CD14-positive monocyte (primary cell): ENCODE measurements at regions of chr1 and their contacts with region 1.

Region 1: GRCh38 chr1:151459331-151460046 is at the start of gene POGZ:
- DNase-seq: peak; percentile 85 to 93 (median 92)
- H3K4me3 ChIP-seq: peak within 1 kb of the TSS; percentile 83 to 99 (median 87)
- H3K4me3 Mint-ChIP-seq: peak within 1 kb of the TSS; percentile 87 to 93
- H3K27ac ChIP-seq: peak within 1 kb of the TSS; percentile 82 to 84
- H3K27ac Mint-ChIP-seq: peak within 1 kb of the TSS; percentile 81 to 97 (median 95)
- H3K4me1 ChIP-seq: peaks cover 21 to 22% of the 10 kb centered on the region in 2 donors
- H3K4me1 Mint-ChIP-seq: peaks cover 20% of the 10 kb centered on the region
- H3K27me3 ChIP-seq: peaks cover 0 to 16% of the 10 kb centered on the region in 2 donors
- H3K27me3 Mint-ChIP-seq: peaks cover 8 to 17% (median 13%) of the 10 kb centered on the region in 3 donors
- CTCF ChIP-seq: no peak
- polyA plus RNA-seq, gene POGZ: 0.75 to 41.7 (median 1.8) TPM

Region 2: GRCh38 chr1:151281969-151282882 is 177.3 kb before region 1 on chr1 and contains the start of gene ZNF687:
- intact Hi-C with region 1: loop called in 1 of 2 experiments (anchors 10 kb)
- DNase-seq: peak; percentile 99
- H3K4me3 ChIP-seq: peak within 1 kb of the TSS; percentile 63 to 96 (median 88)
- H3K4me3 Mint-ChIP-seq: peak within 1 kb of the TSS; percentile 99 to 100
- H3K27ac ChIP-seq: peak within 1 kb of the TSS; percentile 94 to 96
- H3K27ac Mint-ChIP-seq: peak within 1 kb of the TSS; percentile 99 to 100 (median 100)
- H3K4me1 ChIP-seq: peaks cover 43 to 61% of the 10 kb centered on the region in 2 donors
- H3K4me1 Mint-ChIP-seq: peaks cover 42% of the 10 kb centered on the region
- H3K27me3 ChIP-seq: no peaks in the 10 kb centered on the region
- H3K27me3 Mint-ChIP-seq: peaks cover 0 to 1% (median 0%) of the 10 kb centered on the region in 3 donors
- CTCF ChIP-seq: no peak
- polyA plus RNA-seq, gene ZNF687: 1.3 to 26.5 (median 1.8) TPM

Region 3: GRCh38 chr1:151539990-151540981 is 80.8 kb after region 1 on chr1 and contains the start of gene TUFT1:
- intact Hi-C with region 1: loop called in 1 of 2 experiments (anchors 5 kb)
- DNase-seq: peak; percentile 81 to 88 (median 86)
- H3K4me3 ChIP-seq: peak within 1 kb of the TSS; percentile 59 to 87 (median 78)
- H3K4me3 Mint-ChIP-seq: peak within 1 kb of the TSS; percentile 95 to 96
- H3K27ac ChIP-seq: peak within 1 kb of the TSS; percentile 25 to 57
- H3K27ac Mint-ChIP-seq: peak within 1 kb of the TSS; percentile 70 to 89 (median 83)
- H3K4me1 ChIP-seq: peaks cover 21% of the 10 kb centered on the region in 2 donors
- H3K4me1 Mint-ChIP-seq: peaks cover 24% of the 10 kb centered on the region
- H3K27me3 ChIP-seq: peaks cover 5 to 20% of the 10 kb centered on the region in 2 donors
- H3K27me3 Mint-ChIP-seq: peaks cover 21 to 30% (median 27%) of the 10 kb centered on the region in 3 donors
- CTCF ChIP-seq: no peak
- polyA plus RNA-seq, gene TUFT1: 1.5 to 1.7 (median 1.6) TPM

Region 4: GRCh38 chr1:151619489-151620093 is 160.1 kb after region 1 on chr1:
- intact Hi-C with region 1: loop called in 1 of 2 experiments (anchors 5 kb)
- DNase-seq: peak; percentile 33 to 66 (median 66)
- H3K4me3 ChIP-seq: peak overlapping the region in 1 of 3 experiments; percentile 63
- H3K4me3 Mint-ChIP-seq: peak overlapping the region; percentile 47 to 54
- H3K27ac ChIP-seq: peak overlapping the region; percentile 68 to 79
- H3K27ac Mint-ChIP-seq: peak overlapping the region; percentile 85 to 94 (median 89)
- H3K4me1 ChIP-seq: peaks cover 62 to 72% of the 10 kb centered on the region in 2 donors
- H3K4me1 Mint-ChIP-seq: peaks cover 65% of the 10 kb centered on the region
- H3K27me3 ChIP-seq: no peaks in the 10 kb centered on the region
- H3K27me3 Mint-ChIP-seq: peaks cover 0 to 2% (median 0%) of the 10 kb centered on the region in 3 donors
- CTCF ChIP-seq: no peak